ENCODE measurements at regions of chr15 and their contacts with region 1.

Region 1: DNA sequence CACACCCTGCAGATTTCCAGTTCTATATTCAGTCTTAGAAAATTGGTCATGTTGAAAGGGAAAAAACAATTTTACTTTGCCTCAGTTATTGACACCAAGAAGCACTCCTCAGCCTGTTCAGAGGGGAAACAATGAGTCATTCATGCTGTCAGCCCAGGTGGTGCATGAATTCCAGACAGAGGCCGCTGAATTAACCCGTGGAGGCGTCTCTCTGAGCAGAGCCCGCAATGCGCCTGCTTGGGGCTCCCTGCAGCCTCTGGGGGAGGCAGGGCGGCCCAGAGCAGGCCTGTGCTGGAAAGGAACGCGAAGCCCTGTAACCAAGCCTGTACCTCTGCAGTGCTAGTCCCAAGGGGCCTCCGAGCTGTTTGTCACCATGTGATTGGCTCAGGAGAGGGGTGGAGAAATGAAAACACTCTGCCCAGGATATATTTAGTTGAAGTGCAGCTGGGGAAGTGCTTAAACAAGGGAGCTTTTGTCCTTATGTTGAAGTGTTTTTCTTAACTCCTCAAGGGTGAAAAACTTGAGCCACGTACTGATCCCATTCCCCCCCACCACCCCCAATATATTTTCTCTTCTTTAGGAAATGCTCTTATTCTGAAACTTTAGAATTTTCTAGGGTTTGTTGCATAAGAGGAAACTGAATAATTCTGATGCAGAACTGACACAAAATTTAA is 68.3 kb upstream of the CHD2 start:
- DNase-seq: peak; percentile 96
- H3K4me3 Mint-ChIP-seq: peak overlapping the region; percentile 62
- H3K27ac Mint-ChIP-seq: peak overlapping the region; percentile 99
- H3K4me1 Mint-ChIP-seq: peaks cover 32% of the 10 kb centered on the region
- H3K27me3 Mint-ChIP-seq: no peaks in the 10 kb centered on the region
- CTCF ChIP-seq: no peak

Region 2: DNA sequence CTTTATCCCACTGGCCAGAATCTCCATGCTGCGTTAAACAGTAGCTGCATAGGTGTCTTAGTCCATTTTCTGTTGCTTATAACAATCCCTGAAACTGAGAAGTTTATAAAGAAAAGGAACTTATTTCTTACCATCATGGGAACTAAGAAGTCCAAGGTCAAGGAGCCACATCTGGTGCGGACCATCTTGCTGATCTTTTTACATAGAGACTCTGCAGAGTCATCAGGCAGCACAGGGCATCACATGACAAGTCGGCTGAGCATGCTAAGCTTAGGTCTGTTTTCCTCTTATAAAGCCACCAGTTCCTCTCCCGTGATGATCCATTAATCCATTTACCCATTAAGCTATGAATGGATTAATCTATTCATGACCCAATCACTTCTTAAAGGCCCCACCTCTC is 153.8 kb before region 1 on chr15:
- CTCF ChIA-PET with region 1: no interaction called
- intact Hi-C with region 1: no loop called
- DNase-seq: no peak
- H3K4me3 Mint-ChIP-seq: no peak overlapping the region
- H3K27ac Mint-ChIP-seq: no peak overlapping the region
- H3K4me1 Mint-ChIP-seq: no peaks in the 10 kb centered on the region
- H3K27me3 Mint-ChIP-seq: peaks cover 52% of the 10 kb centered on the region
- CTCF ChIP-seq: no peak

Region 3: GRCh38 chr15:92820236-92821021 is 11.4 kb before region 1 on chr15:
- CTCF ChIA-PET with region 1: interaction called, 11 read pairs
- intact Hi-C with region 1: no loop called
- DNase-seq: peak; percentile 95
- H3K4me3 Mint-ChIP-seq: peak overlapping the region; percentile 81
- H3K27ac Mint-ChIP-seq: peak overlapping the region; percentile 95
- H3K4me1 Mint-ChIP-seq: peaks cover 52% of the 10 kb centered on the region
- H3K27me3 Mint-ChIP-seq: no peaks in the 10 kb centered on the region
- CTCF ChIP-seq: no peak

Measured in Calu3 (cell line).